ENCODE measurements at regions of chr3 and their contacts with region 1.

Region 1: GRCh38 chr3:142279965-142280590 is 54.7 kb upstream of the GK5 start:
- DNase-seq: peak; percentile 55
- ATAC-seq: peak; percentile 93
- H3K4me3 Mint-ChIP-seq: no peak overlapping the region
- H3K27ac Mint-ChIP-seq: peak overlapping the region; percentile 41
- H3K4me1 Mint-ChIP-seq: peaks cover 25% of the 10 kb centered on the region
- H3K27me3 Mint-ChIP-seq: no peaks in the 10 kb centered on the region

Region 2: DNA sequence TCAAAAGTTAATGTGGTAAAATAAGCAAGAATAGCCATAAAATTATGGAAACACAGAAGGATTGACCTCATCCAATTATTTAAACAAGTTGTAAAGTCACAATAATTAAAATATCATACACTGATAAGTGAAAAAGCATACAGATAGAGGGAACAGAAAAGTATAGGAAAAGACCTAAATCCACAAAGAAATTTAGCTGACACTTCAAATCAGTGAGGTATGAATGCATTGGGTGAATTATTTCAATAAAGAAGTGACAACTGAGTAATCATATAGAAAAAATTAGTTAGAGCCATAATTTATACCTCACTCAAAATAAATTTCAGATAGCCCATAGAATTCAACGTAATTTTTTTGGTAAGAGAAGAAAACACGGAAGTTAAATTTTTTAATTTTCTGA is 155.8 kb before region 1 on chr3:
- CTCF ChIA-PET with region 1: interaction called, 45 read pairs
- DNase-seq: no peak
- ATAC-seq: no peak
- H3K4me3 Mint-ChIP-seq: no peak overlapping the region
- H3K27ac Mint-ChIP-seq: no peak overlapping the region
- H3K4me1 Mint-ChIP-seq: peaks cover 4% of the 10 kb centered on the region
- H3K27me3 Mint-ChIP-seq: no peaks in the 10 kb centered on the region

Region 3: GRCh38 chr3:142129516-142130171 is 150.4 kb before region 1 on chr3:
- CTCF ChIA-PET with region 1: interaction called, 45 read pairs
- DNase-seq: no peak
- ATAC-seq: no peak
- H3K4me3 Mint-ChIP-seq: no peak overlapping the region
- H3K27ac Mint-ChIP-seq: no peak overlapping the region
- H3K4me1 Mint-ChIP-seq: peaks cover 6% of the 10 kb centered on the region
- H3K27me3 Mint-ChIP-seq: no peaks in the 10 kb centered on the region

Region 4: GRCh38 chr3:142912402-142913172 is 632.5 kb after region 1 on chr3:
- CTCF ChIA-PET with region 1: no interaction called
- DNase-seq: no peak
- ATAC-seq: no peak
- H3K4me3 Mint-ChIP-seq: no peak overlapping the region
- H3K27ac Mint-ChIP-seq: no peak overlapping the region
- H3K4me1 Mint-ChIP-seq: peaks cover 2% of the 10 kb centered on the region
- H3K27me3 Mint-ChIP-seq: peaks cover 46% of the 10 kb centered on the region